ENCODE measurements at regions of chr3 and their contacts with region 1.

Region 1: GRCh38 chr3:11288786-11289682 is 16.8 kb downstream of the ATG7 start:
- DNase-seq: no peak
- ATAC-seq: peak; percentile 82
- H3K4me3 Mint-ChIP-seq: peak overlapping the region; percentile 81
- H3K27ac Mint-ChIP-seq: peak overlapping the region; percentile 99
- H3K4me1 Mint-ChIP-seq: peaks cover 57% of the 10 kb centered on the region
- H3K27me3 Mint-ChIP-seq: no peaks in the 10 kb centered on the region
- CTCF ChIP-seq: no peak

Region 2: DNA sequence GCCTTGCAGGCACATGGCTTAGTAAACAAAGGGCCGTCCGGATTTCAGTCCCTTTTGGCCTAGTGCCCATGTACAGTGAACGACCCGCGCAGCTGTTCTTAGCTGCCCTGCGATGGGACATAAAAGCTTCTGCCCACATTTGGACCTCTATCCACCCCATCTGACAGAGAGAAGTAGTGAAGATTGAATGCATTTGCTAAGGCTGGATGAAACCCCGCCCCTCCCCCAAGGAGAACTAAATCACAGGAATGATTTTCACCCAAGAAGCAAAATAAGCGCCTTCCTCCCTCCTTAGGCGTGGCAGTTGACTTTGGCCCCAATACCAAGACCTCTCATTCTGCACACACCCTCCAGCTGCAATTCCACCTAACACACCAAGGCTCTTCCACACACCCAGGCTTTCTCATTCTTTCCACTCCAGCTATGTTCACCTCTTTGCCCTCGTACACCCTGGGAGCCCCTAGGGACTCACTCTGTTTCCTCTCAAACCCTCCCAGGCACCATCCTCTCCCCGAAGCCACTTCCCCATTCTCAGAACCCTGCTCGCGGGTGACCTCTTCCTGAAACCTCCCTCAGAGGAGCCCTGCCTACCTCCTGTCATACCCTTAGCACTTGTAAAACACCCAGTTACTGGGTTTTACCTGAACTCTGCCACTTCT is 148.9 kb before region 1 on chr3:
- CTCF ChIA-PET with region 1: no interaction called
- POLR2A ChIA-PET with region 1: no interaction called
- intact Hi-C with region 1: loop called (anchors 5 kb)
- DNase-seq: peak; percentile 56
- ATAC-seq: peak; percentile 99
- H3K4me3 Mint-ChIP-seq: peak overlapping the region; percentile 39
- H3K27ac Mint-ChIP-seq: peak overlapping the region; percentile 57
- H3K4me1 Mint-ChIP-seq: peaks cover 34% of the 10 kb centered on the region
- H3K27me3 Mint-ChIP-seq: no peaks in the 10 kb centered on the region
- CTCF ChIP-seq: no peak

Region 3: GRCh38 chr3:11236595-11237461 is 52.2 kb before region 1 on chr3:
- CTCF ChIA-PET with region 1: interaction called, 5 read pairs
- POLR2A ChIA-PET with region 1: interaction called, 4 read pairs
- intact Hi-C with region 1: loop called (anchors 1 kb)
- DNase-seq: peak; percentile 62
- ATAC-seq: peak; percentile 76
- H3K4me3 Mint-ChIP-seq: no peak overlapping the region
- H3K27ac Mint-ChIP-seq: no peak overlapping the region
- H3K4me1 Mint-ChIP-seq: no peaks in the 10 kb centered on the region
- H3K27me3 Mint-ChIP-seq: peaks cover 21% of the 10 kb centered on the region
- CTCF ChIP-seq: peak; percentile 78

Region 4: GRCh38 chr3:11271986-11272904 is 16.8 kb before region 1 on chr3 and contains the start of gene ATG7:
- CTCF ChIA-PET with region 1: interaction called, 21 read pairs
- POLR2A ChIA-PET with region 1: interaction called, 237 read pairs
- intact Hi-C with region 1: loop called (anchors 1 kb)
- DNase-seq: peak; percentile 97
- ATAC-seq: peak; percentile 97
- H3K4me3 Mint-ChIP-seq: peak within 1 kb of the TSS; percentile 94
- H3K27ac Mint-ChIP-seq: peak within 1 kb of the TSS; percentile 94
- H3K4me1 Mint-ChIP-seq: peaks cover 29% of the 10 kb centered on the region
- H3K27me3 Mint-ChIP-seq: no peaks in the 10 kb centered on the region
- CTCF ChIP-seq: no peak
- total RNA-seq, gene ATG7: 49.0 and 51.7 TPM in 2 replicates

Region 5: DNA sequence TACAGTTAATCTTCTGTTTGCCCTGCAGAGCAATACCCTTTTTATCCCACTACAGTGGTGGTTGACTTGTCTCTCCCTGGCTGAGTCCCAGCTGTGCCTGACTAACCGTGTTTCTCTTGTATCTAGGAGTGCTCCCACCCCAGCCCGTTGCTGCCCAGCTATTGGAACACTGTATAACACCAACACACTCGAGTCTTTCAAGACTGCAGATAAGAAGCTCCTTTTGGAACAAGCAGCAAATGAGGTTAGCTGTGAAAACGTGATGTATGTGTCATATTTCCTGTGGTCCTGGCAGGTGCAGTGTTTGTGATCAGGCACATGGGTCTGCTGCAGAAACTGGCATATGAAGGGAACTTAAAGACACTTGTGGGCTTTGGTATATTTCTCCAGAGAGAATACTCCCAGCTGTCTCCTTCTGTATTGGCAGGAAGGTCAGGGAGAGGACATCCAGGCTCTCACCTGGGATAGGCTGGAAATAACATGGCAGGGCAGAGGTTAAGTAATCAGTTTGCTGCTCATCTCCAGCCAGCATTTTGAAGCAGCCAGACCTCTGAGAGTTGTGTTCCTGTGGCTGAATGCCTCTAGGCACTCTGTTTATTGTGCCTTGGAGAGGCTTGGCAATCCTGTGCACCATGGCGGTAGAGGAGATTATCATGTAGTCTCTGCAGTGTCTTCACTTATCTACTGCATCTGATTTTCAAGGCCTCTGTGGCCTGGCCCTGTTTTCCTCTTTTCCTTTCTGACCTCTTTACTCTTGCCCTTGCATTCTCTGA is 18.0 kb after region 1 on chr3:
- CTCF ChIA-PET with region 1: no interaction called
- POLR2A ChIA-PET with region 1: interaction called, 6 read pairs
- intact Hi-C with region 1: loop called (anchors 2 kb)
- DNase-seq: no peak
- ATAC-seq: peak; percentile 28
- H3K4me3 Mint-ChIP-seq: no peak overlapping the region
- H3K27ac Mint-ChIP-seq: no peak overlapping the region
- H3K4me1 Mint-ChIP-seq: peaks cover 11% of the 10 kb centered on the region
- H3K27me3 Mint-ChIP-seq: no peaks in the 10 kb centered on the region
- CTCF ChIP-seq: no peak

Region 6: GRCh38 chr3:12054256-12054655 is 765.2 kb after region 1 on chr3:
- CTCF ChIA-PET with region 1: no interaction called
- POLR2A ChIA-PET with region 1: no interaction called
- intact Hi-C with region 1: no loop called
- DNase-seq: no peak
- ATAC-seq: no peak
- H3K4me3 Mint-ChIP-seq: no peak overlapping the region
- H3K27ac Mint-ChIP-seq: no peak overlapping the region
- H3K4me1 Mint-ChIP-seq: no peaks in the 10 kb centered on the region
- H3K27me3 Mint-ChIP-seq: peaks cover 27% of the 10 kb centered on the region
- CTCF ChIP-seq: no peak

Measured in activated B cell treated with CpG ODN at 0.5 μM for 24 hours (primary cell).